Aorta (tissue), 5 donors: ENCODE measurements at regions of chr5 and their contacts with region 1.

Region 1: GRCh38 chr5:91499943-91500531 is 116.9 kb upstream of the ARRDC3 start:
- DNase-seq: no peak
- ATAC-seq: no peak
- H3K4me3 ChIP-seq: no peak overlapping the region
- H3K27ac ChIP-seq: no peak overlapping the region
- H3K4me1 ChIP-seq: no peaks in the 10 kb centered on the region
- H3K27me3 ChIP-seq: no peaks in the 10 kb centered on the region

Region 2: DNA sequence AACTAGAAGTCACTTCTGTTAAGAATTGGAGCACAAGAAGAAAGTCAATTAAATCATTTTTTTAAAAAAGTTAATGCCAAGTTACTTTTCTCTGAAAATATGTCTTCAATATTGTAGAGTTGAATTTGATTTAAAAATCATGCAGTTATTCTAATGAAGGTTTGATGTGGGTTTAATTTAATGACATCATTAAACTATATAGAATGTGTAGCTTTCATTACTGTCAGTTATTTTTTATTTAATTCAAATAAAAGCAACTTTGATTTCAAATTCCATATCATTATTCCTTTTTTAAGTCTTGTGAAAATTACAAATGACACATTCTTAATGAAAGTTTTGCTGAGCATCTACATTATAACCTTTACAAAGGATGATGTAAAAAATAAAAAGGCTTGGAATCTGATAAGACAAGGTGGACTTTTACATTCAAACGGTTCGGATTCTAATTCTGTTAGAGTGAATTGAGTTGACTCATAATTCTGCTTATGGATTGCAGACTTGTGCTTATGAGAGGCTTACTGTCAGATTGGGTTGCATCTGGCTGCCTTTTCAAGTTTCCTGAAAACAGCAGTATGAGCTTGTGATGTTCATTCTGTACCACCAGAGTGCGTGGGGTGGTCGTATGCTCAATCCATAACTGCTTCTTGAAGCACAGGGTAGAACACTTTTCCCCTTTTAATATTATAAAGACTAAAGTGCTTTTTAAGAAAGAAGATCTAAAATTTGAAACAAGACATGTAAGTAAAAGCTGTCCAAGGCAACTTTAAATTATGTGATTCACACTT is 136.1 kb after region 1 on chr5:
- intact Hi-C with region 1: loop called in 1 of 2 experiments (anchors 10 kb)
- DNase-seq: no peak
- ATAC-seq: no peak
- H3K4me3 ChIP-seq: no peak overlapping the region
- H3K27ac ChIP-seq: no peak overlapping the region
- H3K4me1 ChIP-seq: no peaks in the 10 kb centered on the region
- H3K27me3 ChIP-seq: no peaks in the 10 kb centered on the region

Region 3: DNA sequence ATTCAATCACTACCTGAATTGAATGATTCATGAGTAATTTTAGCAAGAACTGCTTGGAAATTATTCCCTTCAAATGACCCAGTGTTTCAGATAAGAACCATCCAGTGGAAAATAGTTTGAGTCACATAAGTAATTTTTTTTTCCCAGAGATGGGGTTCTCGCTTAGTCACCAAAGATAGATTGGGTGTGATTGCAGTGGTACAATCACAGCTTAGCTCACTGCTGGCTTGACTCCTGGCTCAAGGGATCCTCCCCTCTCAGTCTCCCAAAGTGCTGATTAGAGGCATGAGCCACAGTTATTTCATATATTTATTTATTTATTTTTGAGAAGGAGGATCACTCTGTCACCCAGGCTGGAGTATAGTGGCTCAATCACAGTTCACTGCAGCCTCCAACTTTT is 457.6 kb after region 1 on chr5:
- intact Hi-C with region 1: no loop called
- DNase-seq: no peak
- ATAC-seq: peak; percentile 19
- H3K4me3 ChIP-seq: no peak overlapping the region
- H3K27ac ChIP-seq: no peak overlapping the region
- H3K4me1 ChIP-seq: no peaks in the 10 kb centered on the region
- H3K27me3 ChIP-seq: no peaks in the 10 kb centered on the region